Activated CD4-positive, alpha-beta T cell treated with anti-CD3 and anti-CD28 coated beads for 36 hours (primary cell): ENCODE measurements at regions of chr1 and their contacts with region 1.

Region 1: DNA sequence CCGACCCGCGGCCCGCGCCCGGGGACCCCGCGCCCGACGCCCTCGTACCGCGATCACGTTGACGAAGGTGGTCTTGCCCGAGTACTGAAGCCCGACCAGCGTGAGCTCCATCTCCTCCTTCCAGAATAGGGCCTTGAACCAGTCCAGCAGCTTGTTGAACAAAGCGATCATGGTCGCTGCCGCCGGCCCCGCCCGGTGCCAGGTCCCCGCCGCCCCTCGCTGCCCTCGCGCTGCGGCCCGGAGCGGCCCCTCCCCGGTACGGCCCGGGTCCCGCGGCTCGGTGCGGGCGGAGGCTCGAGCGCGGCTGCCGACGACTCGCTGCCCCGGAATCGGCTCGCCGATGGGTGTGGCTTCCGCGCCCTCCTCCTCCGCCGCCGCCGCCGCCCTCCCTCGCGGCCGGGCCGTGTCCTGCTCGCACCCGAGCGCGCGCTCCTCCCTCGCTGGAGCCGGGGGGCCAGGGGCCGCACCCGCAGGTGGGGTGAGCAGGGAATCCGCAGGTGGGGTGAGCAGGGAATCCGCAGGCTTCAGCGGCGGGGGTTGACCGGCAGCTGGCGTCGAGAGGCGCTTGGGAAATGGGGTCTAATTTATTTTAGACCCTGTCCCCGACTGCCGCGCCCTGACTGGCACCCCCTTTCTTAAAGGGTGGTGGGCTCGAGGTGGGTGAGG is at the start of gene ARL8A:
- DNase-seq: peak; percentile 83
- ATAC-seq: peak; percentile 68
- H3K4me3 Mint-ChIP-seq: peak within 1 kb of the TSS; percentile 95
- H3K27ac Mint-ChIP-seq: peak within 1 kb of the TSS; percentile 92
- H3K4me1 Mint-ChIP-seq: peaks cover 31% of the 10 kb centered on the region
- H3K27me3 Mint-ChIP-seq: no peaks in the 10 kb centered on the region
- total RNA-seq, gene ARL8A: 32.3 to 51.7 TPM

Region 2: GRCh38 chr1:201506556-201507359 is 637.8 kb before region 1 on chr1 and contains the start of gene CSRP1:
- CTCF ChIA-PET with region 1: no interaction called
- POLR2A ChIA-PET with region 1: no interaction called
- intact Hi-C with region 1: loop called in 1 of 2 experiments (anchors 10 kb)
- DNase-seq: peak; percentile 92
- ATAC-seq: peak; percentile 94
- H3K4me3 Mint-ChIP-seq: peak within 1 kb of the TSS; percentile 91
- H3K27ac Mint-ChIP-seq: peak within 1 kb of the TSS; percentile 89
- H3K4me1 Mint-ChIP-seq: peaks cover 31% of the 10 kb centered on the region
- H3K27me3 Mint-ChIP-seq: no peaks in the 10 kb centered on the region
- total RNA-seq, gene CSRP1: 49.2 to 50.7 TPM

Region 3: DNA sequence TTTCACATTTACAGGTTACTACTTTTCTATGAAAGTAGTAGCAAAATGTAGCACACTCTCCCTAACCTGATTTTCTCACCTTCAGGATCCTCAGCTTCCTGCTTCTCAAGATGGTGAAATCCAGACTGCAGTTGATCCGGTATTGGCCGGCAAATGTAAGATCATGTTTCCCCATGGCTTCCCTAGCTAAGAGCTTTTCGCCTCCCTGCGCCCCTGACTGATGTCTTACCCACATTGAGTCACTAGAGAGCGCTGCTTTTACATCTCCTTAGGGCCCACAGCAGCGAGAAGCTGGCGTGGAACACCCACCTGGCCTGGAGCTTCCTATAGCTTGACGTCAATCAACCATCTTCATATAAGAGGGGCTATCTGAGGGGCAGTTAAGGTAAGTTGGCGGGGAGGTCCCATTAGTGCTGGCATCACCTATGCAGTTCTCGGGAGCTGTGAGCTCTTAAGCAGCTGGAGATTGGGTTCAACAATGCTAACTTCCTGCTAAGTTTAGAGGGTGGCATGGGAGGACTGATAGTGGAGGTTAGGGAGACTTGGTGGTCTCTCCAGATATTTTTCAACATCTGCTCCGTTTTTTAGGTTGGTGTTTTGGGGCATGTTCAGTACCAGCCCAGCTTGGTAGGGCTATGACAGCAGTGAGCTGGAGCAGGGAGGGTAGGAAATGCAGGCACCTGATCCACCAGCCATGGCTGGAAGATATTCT is 10.4 kb after region 1 on chr1:
- CTCF ChIA-PET with region 1: interaction called, 10 read pairs
- POLR2A ChIA-PET with region 1: interaction called, 6 read pairs
- intact Hi-C with region 1: loop called (anchors 1 kb)
- DNase-seq: peak; percentile 67
- ATAC-seq: peak; percentile 63
- H3K4me3 Mint-ChIP-seq: no peak overlapping the region
- H3K27ac Mint-ChIP-seq: peak overlapping the region; percentile 78
- H3K4me1 Mint-ChIP-seq: peaks cover 47% of the 10 kb centered on the region
- H3K27me3 Mint-ChIP-seq: no peaks in the 10 kb centered on the region

Region 4: GRCh38 chr1:202160377-202160940 is 15.9 kb after region 1 on chr1 and contains the start of gene PTPN7:
- CTCF ChIA-PET with region 1: interaction called, 11 read pairs
- POLR2A ChIA-PET with region 1: interaction called, 5 read pairs
- intact Hi-C with region 1: loop called (anchors 1 kb)
- DNase-seq: peak; percentile 98
- ATAC-seq: peak; percentile 69
- H3K4me3 Mint-ChIP-seq: peak within 1 kb of the TSS; percentile 97
- H3K27ac Mint-ChIP-seq: peak within 1 kb of the TSS; percentile 99
- H3K4me1 Mint-ChIP-seq: peaks cover 80% of the 10 kb centered on the region
- H3K27me3 Mint-ChIP-seq: no peaks in the 10 kb centered on the region
- total RNA-seq, gene PTPN7: 188 to 221 TPM